ENCODE measurements at regions of chr6 and their contacts with region 1.

Region 1: GRCh38 chr6:137995371-137995770 is 111.8 kb downstream of the PERP start:
- DNase-seq: no peak
- H3K4me3 ChIP-seq: no peak overlapping the region
- H3K27ac ChIP-seq: no peak overlapping the region
- H3K4me1 ChIP-seq: no peaks in the 10 kb centered on the region
- H3K27me3 ChIP-seq: no peaks in the 10 kb centered on the region
- CTCF ChIP-seq: no peak

Region 2: DNA sequence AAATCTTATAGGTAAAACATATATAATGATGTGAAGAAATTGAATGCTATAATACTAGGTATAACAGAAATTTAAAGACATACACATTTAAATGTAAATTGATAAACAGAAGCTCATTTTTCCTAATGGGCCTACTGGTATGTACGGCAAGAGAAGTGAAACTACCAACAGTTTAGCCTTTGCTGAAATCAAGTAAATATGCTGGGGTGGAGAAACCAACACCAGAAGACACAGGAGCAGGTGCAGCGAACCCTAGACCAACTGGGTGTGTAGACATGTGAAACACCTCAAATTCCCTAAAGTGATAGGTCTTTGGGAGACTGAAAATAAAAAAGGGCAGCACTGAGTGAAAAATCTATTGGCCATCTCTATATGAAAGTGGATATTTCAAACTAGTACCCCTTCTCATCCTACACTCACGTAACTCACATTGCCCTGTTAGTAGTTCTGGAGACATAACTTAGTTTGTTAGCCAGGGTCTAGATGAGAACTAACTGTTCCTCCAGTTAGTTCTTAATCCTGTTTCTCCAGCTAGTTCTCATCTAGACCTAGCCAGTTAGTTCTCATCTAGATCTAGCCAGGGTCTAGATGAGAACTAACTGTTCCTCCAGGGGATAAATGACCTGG is 1020.2 kb before region 1 on chr6:
- CTCF ChIA-PET with region 1: no interaction called
- dilution Hi-C with region 1: no loop called
- in situ Hi-C with region 1: no loop called
- intact Hi-C with region 1: no loop called
- DNase-seq: no peak
- H3K4me3 ChIP-seq: no peak overlapping the region
- H3K27ac ChIP-seq: no peak overlapping the region
- H3K4me1 ChIP-seq: no peaks in the 10 kb centered on the region
- H3K27me3 ChIP-seq: peaks cover 2% of the 10 kb centered on the region
- CTCF ChIP-seq: no peak

Region 3: DNA sequence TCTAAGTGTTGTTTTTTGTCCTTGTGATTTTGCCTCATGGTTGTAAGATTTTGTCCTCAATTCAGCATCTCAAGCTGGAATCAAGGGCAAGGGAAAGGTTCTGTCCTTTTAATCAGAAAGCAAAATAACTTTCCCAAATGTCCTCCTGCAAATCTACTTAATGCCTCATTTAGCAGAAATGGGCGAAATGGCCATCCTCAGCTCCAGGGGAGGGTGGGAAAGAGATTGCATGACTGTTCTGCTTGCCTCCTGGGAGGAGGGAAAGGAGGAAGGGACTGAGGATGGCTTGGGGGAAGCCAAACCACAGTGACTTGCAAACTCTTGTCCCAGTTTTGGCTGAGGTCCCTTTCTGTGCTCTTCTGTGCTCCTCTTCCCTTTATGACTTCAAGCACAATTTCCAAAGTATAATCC is 84.9 kb before region 1 on chr6:
- CTCF ChIA-PET with region 1: no interaction called
- dilution Hi-C with region 1: loop called (anchors 5 kb)
- in situ Hi-C with region 1: no loop called
- intact Hi-C with region 1: no loop called
- DNase-seq: no peak
- H3K4me3 ChIP-seq: no peak overlapping the region
- H3K27ac ChIP-seq: no peak overlapping the region
- H3K4me1 ChIP-seq: peaks cover 4% of the 10 kb centered on the region
- H3K27me3 ChIP-seq: no peaks in the 10 kb centered on the region
- CTCF ChIP-seq: no peak

Region 4: DNA sequence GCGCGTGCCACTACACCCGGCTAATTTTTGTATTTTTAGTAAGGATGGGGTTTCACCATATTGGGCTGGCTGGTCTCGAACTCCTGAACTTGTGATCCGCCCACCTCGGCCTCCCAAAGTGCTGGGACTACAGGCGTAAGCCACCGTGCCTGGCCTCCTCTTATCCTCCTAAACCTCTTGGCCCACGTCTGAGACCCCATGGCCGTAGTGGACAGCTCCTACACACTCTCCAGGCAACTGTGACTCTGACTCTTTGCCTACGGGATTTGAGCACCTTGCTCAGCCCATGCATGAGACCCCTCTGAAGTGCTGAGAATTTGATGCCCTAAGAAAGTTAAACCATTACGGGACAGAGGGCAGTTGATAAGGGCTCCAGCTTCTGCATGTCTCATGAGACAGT is 86.9 kb after region 1 on chr6:
- CTCF ChIA-PET with region 1: no interaction called
- dilution Hi-C with region 1: no loop called
- in situ Hi-C with region 1: no loop called
- intact Hi-C with region 1: no loop called
- DNase-seq: no peak
- H3K4me3 ChIP-seq: no peak overlapping the region
- H3K27ac ChIP-seq: no peak overlapping the region
- H3K4me1 ChIP-seq: peaks cover 9% of the 10 kb centered on the region
- H3K27me3 ChIP-seq: no peaks in the 10 kb centered on the region
- CTCF ChIP-seq: no peak

Measured in mammary epithelial cell (primary cell).